ENCODE measurements at regions of chr4 and their contacts with region 1.

Region 1: DNA sequence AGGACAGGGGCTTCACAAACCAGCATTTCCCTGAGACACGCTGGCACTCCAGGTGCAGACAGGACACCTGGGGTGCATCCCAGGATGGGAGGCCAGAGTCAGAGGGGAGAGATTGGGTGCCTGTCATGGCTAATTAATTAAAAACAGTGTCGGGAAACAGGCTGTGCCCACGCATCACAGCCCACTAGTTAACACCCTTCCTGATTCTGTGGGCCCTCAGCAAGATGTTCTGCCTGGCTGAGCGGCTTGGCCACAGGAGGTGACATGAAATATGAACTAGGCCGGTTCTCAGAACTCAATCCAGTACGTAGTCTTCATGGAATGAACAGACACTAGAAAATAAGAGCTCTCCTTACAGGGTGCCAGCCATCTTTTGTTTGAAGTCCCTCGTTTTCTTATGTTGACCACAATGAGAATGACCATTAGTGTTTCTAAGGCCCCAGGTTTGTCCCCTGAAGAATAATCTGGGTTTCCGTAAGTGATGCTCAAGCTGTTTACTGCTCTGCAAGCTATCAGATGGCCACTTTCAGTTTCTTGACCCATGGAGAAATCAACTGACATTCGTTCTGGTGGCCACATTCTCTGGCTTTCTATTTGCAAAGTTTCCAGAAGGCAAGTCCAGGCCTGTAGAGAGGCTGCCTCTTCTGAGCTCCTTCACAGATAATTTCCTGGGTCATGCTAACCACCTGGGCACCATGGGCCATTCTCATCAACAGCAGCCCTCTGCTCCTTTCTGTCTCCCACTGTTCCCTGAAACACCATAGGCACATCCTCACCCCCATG is 72.3 kb downstream of the SLC34A2 start:
- DNase-seq: no peak
- ATAC-seq: peak; percentile 53; the same call in 2 of the 3 replicates
- H3K4me3 ChIP-seq: no peak overlapping the region
- H3K27ac ChIP-seq: no peak overlapping the region
- H3K4me1 ChIP-seq: peaks cover 4% of the 10 kb centered on the region; the same call in 1 of the 2 replicates
- H3K27me3 ChIP-seq: no peaks in the 10 kb centered on the region
- CTCF ChIP-seq: no peak
- EP300 ChIP-seq: no peak
- POLR2A ChIP-seq: no peak
- RAD21 ChIP-seq: no peak

Region 2: DNA sequence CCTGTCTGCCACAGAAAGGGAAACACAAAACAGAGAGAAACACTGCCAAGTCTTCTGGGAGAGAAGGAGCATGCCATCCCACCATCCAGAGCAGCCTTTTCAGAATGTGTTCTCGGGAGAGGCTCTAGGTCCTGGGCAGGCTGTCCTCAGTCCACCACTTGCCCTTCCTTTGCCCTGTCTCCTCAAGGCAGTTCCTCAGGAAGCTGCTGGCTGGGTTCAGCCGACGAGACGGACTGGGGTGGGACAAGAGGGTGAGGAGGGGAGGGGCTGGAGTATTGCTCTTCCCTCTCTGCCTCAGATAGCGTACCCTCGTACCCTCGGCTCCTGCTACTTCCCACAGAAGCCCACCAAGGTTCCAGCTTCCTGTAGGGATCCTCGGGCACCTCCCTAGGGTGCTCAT is 670.6 kb before region 1 on chr4:
- CTCF ChIA-PET with region 1: no interaction called
- POLR2A ChIA-PET with region 1: no interaction called
- RAD21 ChIA-PET with region 1: no interaction called
- SMC1A ChIA-PET with region 1: no interaction called
- in situ Hi-C with region 1: no loop called
- intact Hi-C with region 1: loop called (anchors 5 kb)
- DNase-seq: no peak
- ATAC-seq: no peak
- H3K4me3 ChIP-seq: no peak overlapping the region
- H3K27ac ChIP-seq: no peak overlapping the region
- H3K4me1 ChIP-seq: no peaks in the 10 kb centered on the region
- H3K27me3 ChIP-seq: 0 out of 4 replicates have a peak, but pooled peaks cover 0 to 1% of the 10 kb centered on the region in 2 experiments
- CTCF ChIP-seq: no peak
- EP300 ChIP-seq: no peak
- POLR2A ChIP-seq: no peak
- RAD21 ChIP-seq: no peak

Region 3: GRCh38 chr4:27027428-27027827 is 1299.5 kb after region 1 on chr4:
- CTCF ChIA-PET with region 1: no interaction called
- POLR2A ChIA-PET with region 1: no interaction called
- RAD21 ChIA-PET with region 1: no interaction called
- SMC1A ChIA-PET with region 1: no interaction called
- in situ Hi-C with region 1: no loop called
- intact Hi-C with region 1: no loop called
- DNase-seq: no peak
- ATAC-seq: no peak
- H3K4me3 ChIP-seq: no peak overlapping the region
- H3K27ac ChIP-seq: no peak overlapping the region
- H3K4me1 ChIP-seq: no peaks in the 10 kb centered on the region
- H3K27me3 ChIP-seq: no peaks in the 10 kb centered on the region
- CTCF ChIP-seq: no peak
- EP300 ChIP-seq: no peak
- POLR2A ChIP-seq: no peak
- RAD21 ChIP-seq: no peak

Measured in GM12878 (cell line).